Activated CD4-positive, alpha-beta T cell treated with anti-CD3 and anti-CD28 coated beads for 36 hours (primary cell): ENCODE measurements at regions of chr10 and their contacts with region 1.

Region 1: DNA sequence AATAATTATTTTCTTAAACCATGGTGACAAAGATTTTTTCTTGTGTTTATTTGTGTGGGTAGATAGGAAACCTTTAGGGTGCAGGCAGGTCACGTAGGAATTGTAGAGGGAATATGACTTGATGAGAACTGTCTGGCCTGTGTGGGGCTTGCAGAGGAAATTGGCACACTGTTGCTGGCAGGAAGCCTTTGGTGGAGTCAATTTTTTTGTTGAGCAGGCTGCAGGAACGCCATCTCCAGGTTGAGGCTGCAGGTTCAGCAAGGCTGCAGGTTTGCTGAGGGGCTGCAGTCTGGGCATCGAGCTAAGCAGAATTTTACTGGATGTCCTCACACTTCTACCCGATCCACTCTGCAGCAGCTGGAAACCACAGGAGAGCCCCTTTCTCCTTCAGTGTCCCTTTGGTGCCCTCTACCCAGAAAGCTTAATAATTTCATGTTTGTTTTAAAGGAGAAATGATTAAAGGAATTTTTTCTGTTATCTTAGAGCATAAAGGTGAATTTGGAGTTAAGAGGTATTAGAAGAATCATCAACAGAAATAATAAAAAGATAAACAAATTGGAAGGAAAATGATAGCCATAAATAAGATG is 37.0 kb downstream of the TBC1D12 start:
- DNase-seq: no peak
- ATAC-seq: no peak
- H3K4me3 Mint-ChIP-seq: no peak overlapping the region
- H3K27ac Mint-ChIP-seq: no peak overlapping the region
- H3K4me1 Mint-ChIP-seq: no peaks in the 10 kb centered on the region
- H3K27me3 Mint-ChIP-seq: peaks cover 18% of the 10 kb centered on the region

Region 2: GRCh38 chr10:93138113-93138870 is 1301.1 kb before region 1 on chr10:
- CTCF ChIA-PET with region 1: no interaction called
- POLR2A ChIA-PET with region 1: no interaction called
- intact Hi-C with region 1: no loop called
- DNase-seq: no peak
- ATAC-seq: no peak
- H3K4me3 Mint-ChIP-seq: no peak overlapping the region
- H3K27ac Mint-ChIP-seq: no peak overlapping the region
- H3K4me1 Mint-ChIP-seq: no peaks in the 10 kb centered on the region
- H3K27me3 Mint-ChIP-seq: peaks cover 11% of the 10 kb centered on the region

Region 3: DNA sequence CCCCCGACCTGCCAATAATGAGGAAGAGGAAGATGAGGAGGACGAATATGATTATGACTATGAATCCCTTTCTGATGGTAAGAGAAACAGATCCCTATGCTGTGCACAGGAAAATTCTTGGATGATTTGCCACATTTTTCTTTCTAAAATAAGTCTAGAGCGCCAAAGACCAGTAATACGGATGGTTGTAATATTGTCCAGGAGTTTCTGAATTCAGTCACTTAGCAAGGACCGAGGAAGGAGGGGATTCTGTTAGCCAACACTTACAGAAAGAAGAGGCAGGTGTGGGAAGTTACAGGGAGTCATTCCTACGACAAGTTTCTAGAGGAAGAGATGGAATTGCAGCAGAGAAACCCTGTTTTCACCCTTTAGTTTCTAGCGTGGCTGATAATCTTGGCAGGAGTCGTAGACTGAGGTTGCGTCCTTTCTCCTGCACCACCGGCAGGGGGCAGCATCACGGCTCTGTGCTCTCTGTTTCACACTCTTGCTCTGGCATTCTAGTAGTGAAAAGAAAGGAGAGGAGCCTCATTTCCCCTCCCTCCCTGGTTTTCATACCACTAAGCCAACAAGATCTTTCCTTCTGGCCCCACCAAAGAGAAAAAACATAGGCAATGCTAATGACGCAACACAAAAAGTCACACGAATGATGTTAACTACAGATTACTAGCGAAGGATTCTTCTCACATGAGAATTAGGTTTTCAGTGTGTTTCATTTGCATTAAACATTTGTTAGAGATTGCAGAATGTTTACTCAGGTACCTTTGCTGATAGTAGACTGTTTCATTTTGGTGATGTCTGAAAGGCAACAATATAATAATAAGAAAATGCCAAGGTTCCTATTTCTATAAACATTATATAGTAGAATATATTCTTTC is 159.3 kb before region 1 on chr10:
- CTCF ChIA-PET with region 1: interaction called, 12 read pairs
- POLR2A ChIA-PET with region 1: no interaction called
- intact Hi-C with region 1: loop called (anchors 1 kb)
- DNase-seq: peak; percentile 78
- ATAC-seq: peak; percentile 71
- H3K4me3 Mint-ChIP-seq: no peak overlapping the region
- H3K27ac Mint-ChIP-seq: no peak overlapping the region
- H3K4me1 Mint-ChIP-seq: no peaks in the 10 kb centered on the region
- H3K27me3 Mint-ChIP-seq: peaks cover 20% of the 10 kb centered on the region